ENCODE measurements at regions of chr15 and their contacts with region 1.

Region 1: DNA sequence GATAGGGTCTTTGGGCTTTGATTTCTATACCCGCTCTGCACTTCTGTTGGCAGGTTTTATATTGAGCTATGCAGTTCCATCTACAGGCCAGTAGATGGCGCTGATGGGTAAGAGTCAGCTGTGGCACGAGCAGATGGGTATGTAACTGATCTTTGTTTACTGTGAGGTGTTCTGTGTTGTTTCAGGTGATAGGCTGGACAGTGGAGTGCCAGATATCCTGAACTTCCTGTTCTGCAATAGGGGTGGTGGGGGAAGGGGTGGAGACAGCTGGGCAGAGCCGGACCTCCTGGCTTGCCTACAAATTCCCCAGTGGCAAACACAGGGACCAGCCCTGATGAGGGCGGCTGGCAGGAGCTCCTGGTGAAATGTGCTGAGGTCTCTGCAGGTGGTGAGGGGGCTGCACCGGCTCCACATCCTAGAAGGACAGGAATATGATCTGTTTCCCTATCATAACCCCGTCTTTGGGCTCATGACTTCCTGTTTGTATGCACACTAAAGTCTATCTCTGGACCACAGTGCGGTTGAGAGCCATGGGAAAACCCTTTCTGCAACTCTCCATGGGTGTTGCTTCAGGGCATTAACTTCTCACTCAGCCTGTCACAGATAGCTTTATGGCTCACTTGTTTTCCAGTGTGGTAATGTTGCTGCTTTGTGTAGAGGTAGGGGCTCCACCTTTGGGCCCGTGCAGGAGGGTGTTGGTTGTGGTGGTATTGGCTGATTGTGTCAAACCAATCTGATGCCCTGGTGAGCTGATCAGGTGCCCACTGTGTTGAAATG is 13.4 kb upstream of the FAM98B start:
- DNase-seq: peak in 4 of 5 donors; percentile 59 to 66 (median 62)
- H3K4me3 ChIP-seq: no peak overlapping the region
- H3K4me3 Mint-ChIP-seq: peak overlapping the region in 1 of 8 donors; percentile 55
- H3K27ac ChIP-seq: no peak overlapping the region
- H3K27ac Mint-ChIP-seq: peak overlapping the region in 1 of 7 donors; percentile 12
- H3K4me1 ChIP-seq: peaks cover 5% of the 10 kb centered on the region
- H3K4me1 Mint-ChIP-seq: peaks cover 0 to 7% (median 3%) of the 10 kb centered on the region in 4 donors
- H3K27me3 ChIP-seq: no peaks in the 10 kb centered on the region
- H3K27me3 Mint-ChIP-seq: peaks cover 20 to 21% of the 10 kb centered on the region in 2 donors

Region 2: GRCh38 chr15:37125143-37125542 is 1315.4 kb before region 1 on chr15:
- CTCF ChIA-PET with region 1: no interaction called
- POLR2A ChIA-PET with region 1: no interaction called
- intact Hi-C with region 1: no loop called
- DNase-seq: no peak
- H3K4me3 ChIP-seq: no peak overlapping the region
- H3K4me3 Mint-ChIP-seq: no peak overlapping the region
- H3K27ac ChIP-seq: no peak overlapping the region
- H3K27ac Mint-ChIP-seq: no peak overlapping the region
- H3K4me1 ChIP-seq: no peaks in the 10 kb centered on the region
- H3K4me1 Mint-ChIP-seq: no peaks in the 10 kb centered on the region
- H3K27me3 ChIP-seq: no peaks in the 10 kb centered on the region
- H3K27me3 Mint-ChIP-seq: peaks cover 5 to 8% of the 10 kb centered on the region in 2 donors

Region 3: GRCh38 chr15:38427380-38427779 is 13.2 kb before region 1 on chr15:
- CTCF ChIA-PET with region 1: interaction called, 11 read pairs
- POLR2A ChIA-PET with region 1: no interaction called
- intact Hi-C with region 1: no loop called
- DNase-seq: no peak
- H3K4me3 ChIP-seq: no peak overlapping the region
- H3K4me3 Mint-ChIP-seq: no peak overlapping the region
- H3K27ac ChIP-seq: no peak overlapping the region
- H3K27ac Mint-ChIP-seq: no peak overlapping the region
- H3K4me1 ChIP-seq: no peaks in the 10 kb centered on the region
- H3K4me1 Mint-ChIP-seq: no peaks in the 10 kb centered on the region
- H3K27me3 ChIP-seq: no peaks in the 10 kb centered on the region
- H3K27me3 Mint-ChIP-seq: peaks cover 7 to 18% of the 10 kb centered on the region in 2 donors

Region 4: GRCh38 chr15:38461066-38461833 is 20.7 kb after region 1 on chr15:
- CTCF ChIA-PET with region 1: interaction called, 11 read pairs
- POLR2A ChIA-PET with region 1: no interaction called
- intact Hi-C with region 1: no loop called
- DNase-seq: no peak
- H3K4me3 ChIP-seq: no peak overlapping the region
- H3K4me3 Mint-ChIP-seq: no peak overlapping the region
- H3K27ac ChIP-seq: no peak overlapping the region
- H3K27ac Mint-ChIP-seq: peak overlapping the region in 1 of 7 donors; percentile 57
- H3K4me1 ChIP-seq: peaks cover 6% of the 10 kb centered on the region
- H3K4me1 Mint-ChIP-seq: peaks cover 33 to 54% (median 35%) of the 10 kb centered on the region in 4 donors
- H3K27me3 ChIP-seq: no peaks in the 10 kb centered on the region
- H3K27me3 Mint-ChIP-seq: no peaks in the 10 kb centered on the region

Region 5: DNA sequence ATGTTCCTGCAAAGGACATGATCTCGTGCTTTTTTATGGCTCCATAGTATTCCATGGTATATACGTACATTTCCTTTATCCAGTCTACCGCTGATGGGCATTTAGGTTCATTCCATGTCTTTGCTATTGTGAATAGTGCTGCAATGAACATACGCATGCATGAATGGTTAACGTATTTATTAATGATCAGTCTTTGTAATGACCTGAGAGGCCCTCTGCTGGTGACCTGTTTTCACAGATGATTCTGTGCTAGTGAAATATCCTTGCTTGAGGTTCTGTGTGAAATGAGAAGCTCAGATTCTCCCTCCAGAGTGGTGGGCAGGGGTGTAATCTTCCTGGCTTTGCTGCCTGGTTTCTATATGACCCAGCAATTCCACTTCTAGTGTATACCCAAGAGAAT is 284.3 kb after region 1 on chr15:
- CTCF ChIA-PET with region 1: interaction called, 19 read pairs
- POLR2A ChIA-PET with region 1: no interaction called
- intact Hi-C with region 1: no loop called
- DNase-seq: no peak
- H3K4me3 ChIP-seq: no peak overlapping the region
- H3K4me3 Mint-ChIP-seq: no peak overlapping the region
- H3K27ac ChIP-seq: no peak overlapping the region
- H3K27ac Mint-ChIP-seq: no peak overlapping the region
- H3K4me1 ChIP-seq: no peaks in the 10 kb centered on the region
- H3K4me1 Mint-ChIP-seq: peaks cover 0 to 3% (median 0%) of the 10 kb centered on the region in 4 donors
- H3K27me3 ChIP-seq: no peaks in the 10 kb centered on the region
- H3K27me3 Mint-ChIP-seq: peaks cover 0 to 1% of the 10 kb centered on the region in 2 donors

Region 6: DNA sequence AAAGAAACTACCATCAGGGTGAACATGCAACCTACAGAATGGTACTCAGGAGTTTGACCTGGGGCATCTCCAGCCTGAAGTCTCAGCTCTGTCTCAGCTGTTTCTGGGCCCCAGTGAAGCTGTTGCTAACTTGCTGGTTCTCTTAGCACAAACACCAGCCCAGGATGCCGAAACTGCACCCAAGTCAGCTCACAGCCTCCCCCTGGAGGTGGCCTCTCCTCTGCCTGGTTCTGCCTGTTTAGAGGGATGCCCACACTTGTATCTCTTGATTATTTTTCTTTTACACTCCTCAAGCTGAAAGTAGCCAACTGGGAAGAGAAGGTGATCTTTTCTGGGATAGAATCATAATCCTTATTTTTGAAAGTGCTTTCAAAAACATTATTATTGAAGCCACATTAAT is 413.1 kb after region 1 on chr15:
- CTCF ChIA-PET with region 1: interaction called, 7 read pairs
- POLR2A ChIA-PET with region 1: no interaction called
- intact Hi-C with region 1: loop called (anchors 1 kb)
- DNase-seq: peak in 4 of 5 donors; percentile 16 to 26 (median 18)
- H3K4me3 ChIP-seq: no peak overlapping the region
- H3K4me3 Mint-ChIP-seq: no peak overlapping the region
- H3K27ac ChIP-seq: no peak overlapping the region
- H3K27ac Mint-ChIP-seq: no peak overlapping the region
- H3K4me1 ChIP-seq: no peaks in the 10 kb centered on the region
- H3K4me1 Mint-ChIP-seq: no peaks in the 10 kb centered on the region
- H3K27me3 ChIP-seq: peaks cover 5% of the 10 kb centered on the region
- H3K27me3 Mint-ChIP-seq: peaks cover 6 to 10% of the 10 kb centered on the region in 2 donors

Region 7: GRCh38 chr15:39125904-39126303 is 685.4 kb after region 1 on chr15:
- CTCF ChIA-PET with region 1: no interaction called
- POLR2A ChIA-PET with region 1: no interaction called
- intact Hi-C with region 1: loop called (anchors 10 kb)
- DNase-seq: peak in 4 of 5 donors; percentile 7 to 25 (median 14)
- H3K4me3 ChIP-seq: no peak overlapping the region
- H3K4me3 Mint-ChIP-seq: no peak overlapping the region
- H3K27ac ChIP-seq: no peak overlapping the region
- H3K27ac Mint-ChIP-seq: no peak overlapping the region
- H3K4me1 ChIP-seq: no peaks in the 10 kb centered on the region
- H3K4me1 Mint-ChIP-seq: peaks cover 0 to 3% (median 0%) of the 10 kb centered on the region in 4 donors
- H3K27me3 ChIP-seq: no peaks in the 10 kb centered on the region
- H3K27me3 Mint-ChIP-seq: peaks cover 9 to 10% of the 10 kb centered on the region in 2 donors

Measured in CD4-positive, alpha-beta memory T cell (primary cell).